HCT116 (cell line): ENCODE measurements at regions of chr2 and their contacts with region 1.

Region 1: DNA sequence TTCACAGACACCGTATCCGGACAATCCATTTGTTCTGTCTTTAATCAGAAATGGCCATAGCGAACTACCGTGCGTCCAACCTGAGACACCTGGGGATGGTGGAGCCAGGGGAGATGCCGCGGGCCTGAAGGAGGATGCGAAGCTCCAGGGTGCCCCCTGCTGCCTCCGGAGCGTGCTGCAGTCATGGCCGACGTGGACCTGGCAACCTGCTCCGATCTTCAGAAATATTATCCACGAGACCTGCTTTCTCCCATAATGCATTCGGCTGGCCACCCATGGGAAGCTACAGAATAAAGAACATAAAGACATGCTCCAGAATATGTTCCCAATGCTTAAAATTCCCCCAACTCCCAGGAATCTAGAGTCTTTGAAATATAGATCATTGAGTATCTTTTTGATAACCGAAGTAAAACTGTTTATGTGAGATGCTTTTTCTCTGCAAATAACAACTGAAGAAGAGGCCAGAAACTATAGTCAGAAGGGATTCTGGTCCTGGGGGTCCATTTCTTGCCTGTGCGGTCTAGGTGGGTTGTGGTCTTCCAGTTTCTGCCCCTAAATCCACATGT is 30.7 kb upstream of the SLC66A3 start:
- DNase-seq: peak; percentile 62
- ATAC-seq: peak; percentile 97
- H3K4me3 ChIP-seq: no peak overlapping the region
- H3K27ac ChIP-seq: no peak overlapping the region
- H3K4me1 ChIP-seq: peaks cover 4 to 25% of the 10 kb centered on the region in 2 experiments; a peak in 3 of 4 replicates
- H3K27me3 ChIP-seq: no peaks in the 10 kb centered on the region
- CTCF ChIP-seq: peak in 2 of 3 experiments; percentile 95 to 97; a peak in 4 of 6 replicates
- POLR2A ChIP-seq: no peak
- RAD21 ChIP-seq: no peak

Region 2: GRCh38 chr2:10709290-10709939 is 415.2 kb before region 1 on chr2:
- CTCF ChIA-PET with region 1: interaction called, 3 read pairs
- POLR2A ChIA-PET with region 1: no interaction called
- RAD21 ChIA-PET with region 1: no interaction called
- intact Hi-C with region 1: loop called (anchors 5 kb)
- DNase-seq: peak; percentile 57
- ATAC-seq: peak; percentile 99
- H3K4me3 ChIP-seq: no peak overlapping the region
- H3K27ac ChIP-seq: no peak overlapping the region
- H3K4me1 ChIP-seq: peaks cover 3 to 11% of the 10 kb centered on the region in 2 experiments; a peak in 2 of 4 replicates
- H3K27me3 ChIP-seq: no peaks in the 10 kb centered on the region
- CTCF ChIP-seq: peak; percentile 71 to 76 (median 74)
- POLR2A ChIP-seq: no peak
- RAD21 ChIP-seq: peak; percentile 87

Region 3: DNA sequence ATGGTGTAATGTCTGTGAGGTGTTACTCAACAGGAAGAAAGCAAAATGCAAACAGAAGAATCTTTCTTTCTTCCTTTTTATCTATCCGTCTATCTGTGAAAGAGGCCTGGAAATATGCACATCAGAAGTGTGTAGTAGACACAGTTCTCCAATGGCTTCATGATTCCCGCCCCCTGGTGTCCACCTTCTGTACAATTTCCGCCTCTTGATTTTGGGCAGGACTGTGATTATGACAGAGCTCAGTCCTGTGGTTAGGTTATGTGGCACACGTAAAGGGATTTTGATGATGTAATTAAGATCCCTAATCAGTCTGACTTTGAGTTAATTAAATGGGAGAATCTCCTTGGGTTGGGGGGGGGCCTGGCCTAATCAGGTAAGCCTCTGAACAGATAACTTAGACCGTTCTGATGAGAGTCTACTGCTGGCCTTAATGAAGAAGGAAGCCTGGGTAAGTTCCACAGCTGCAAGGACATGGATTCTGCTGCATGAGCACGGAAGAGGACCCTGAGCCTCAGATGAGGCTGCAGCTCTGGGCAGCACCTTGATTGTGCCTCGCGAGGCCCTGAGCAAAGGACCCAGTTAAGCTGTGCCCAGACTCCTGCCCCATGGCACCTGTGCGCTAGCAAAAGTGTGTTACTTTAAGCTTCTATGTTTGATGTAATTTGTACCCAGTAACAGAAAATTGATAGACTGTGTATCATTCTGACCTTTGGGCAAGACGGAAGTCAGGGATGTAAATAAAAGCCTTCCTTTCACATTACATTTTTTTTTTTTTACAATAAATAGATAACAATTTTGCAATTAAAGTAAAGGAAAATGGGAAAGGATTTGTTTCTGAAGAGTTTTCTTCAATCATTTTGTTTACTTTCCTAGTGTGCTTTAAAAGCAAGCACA is 224.1 kb before region 1 on chr2:
- CTCF ChIA-PET with region 1: interaction called, 13 read pairs
- POLR2A ChIA-PET with region 1: no interaction called
- RAD21 ChIA-PET with region 1: no interaction called
- intact Hi-C with region 1: loop called (anchors 5 kb)
- DNase-seq: peak; percentile 68
- ATAC-seq: peak; percentile 95
- H3K4me3 ChIP-seq: no peak overlapping the region
- H3K27ac ChIP-seq: 0 out of 2 replicates have a peak overlapping the region, but pooled peaks have one; percentile 40
- H3K4me1 ChIP-seq: peaks cover 9 to 20% of the 10 kb centered on the region in 2 experiments; a peak in 3 of 4 replicates
- H3K27me3 ChIP-seq: no peaks in the 10 kb centered on the region
- CTCF ChIP-seq: peak; percentile 62 to 73 (median 69)
- POLR2A ChIP-seq: no peak
- RAD21 ChIP-seq: peak; percentile 53

Region 4: GRCh38 chr2:11073251-11073650 is 51.3 kb before region 1 on chr2:
- CTCF ChIA-PET with region 1: no interaction called
- POLR2A ChIA-PET with region 1: no interaction called
- RAD21 ChIA-PET with region 1: no interaction called
- intact Hi-C with region 1: loop called (anchors 2 kb)
- DNase-seq: peak; percentile 54
- ATAC-seq: peak; percentile 97
- H3K4me3 ChIP-seq: peak overlapping the region in 1 of 2 experiments; percentile 10; a peak in 1 of 4 replicates
- H3K27ac ChIP-seq: no peak overlapping the region
- H3K4me1 ChIP-seq: peaks cover 0 to 26% of the 10 kb centered on the region in 2 experiments; a peak in 3 of 4 replicates
- H3K27me3 ChIP-seq: no peaks in the 10 kb centered on the region
- CTCF ChIP-seq: peak; percentile 74 to 95 (median 94)
- POLR2A ChIP-seq: no peak
- RAD21 ChIP-seq: peak; percentile 68

Region 5: DNA sequence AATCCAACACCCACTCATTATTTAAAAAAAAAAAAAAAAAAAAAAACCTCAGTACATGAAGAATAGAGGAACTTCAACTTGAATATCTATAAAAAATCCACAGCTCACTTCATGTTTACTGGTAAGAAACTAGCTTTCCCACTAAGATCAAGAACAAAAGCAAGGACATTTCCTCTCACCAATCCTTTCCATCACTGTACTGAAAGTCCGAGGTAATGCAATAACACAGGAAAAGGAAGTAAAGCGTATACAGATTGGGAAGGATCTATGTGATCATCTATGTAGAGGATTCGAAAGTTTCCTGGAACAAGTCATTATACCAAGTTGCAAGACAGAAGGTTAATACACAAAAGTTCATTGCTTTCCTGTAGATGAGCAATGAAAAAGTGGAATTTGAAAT is 156.6 kb after region 1 on chr2:
- CTCF ChIA-PET with region 1: no interaction called
- POLR2A ChIA-PET with region 1: no interaction called
- RAD21 ChIA-PET with region 1: no interaction called
- intact Hi-C with region 1: no loop called
- DNase-seq: no peak
- ATAC-seq: no peak
- H3K4me3 ChIP-seq: no peak overlapping the region
- H3K27ac ChIP-seq: no peak overlapping the region
- H3K4me1 ChIP-seq: no peaks in the 10 kb centered on the region
- H3K27me3 ChIP-seq: no peaks in the 10 kb centered on the region
- CTCF ChIP-seq: no peak
- POLR2A ChIP-seq: no peak
- RAD21 ChIP-seq: no peak